Activated naive CD4-positive, alpha-beta T cell treated with anti-CD3 and anti-CD28 coated beads, Interleukin-2, amount 10 ng/mL, durations not matched to agents 7 days and 5 days (primary cell): ENCODE measurements at regions of chr1 and their contacts with region 1.

Region 1: DNA sequence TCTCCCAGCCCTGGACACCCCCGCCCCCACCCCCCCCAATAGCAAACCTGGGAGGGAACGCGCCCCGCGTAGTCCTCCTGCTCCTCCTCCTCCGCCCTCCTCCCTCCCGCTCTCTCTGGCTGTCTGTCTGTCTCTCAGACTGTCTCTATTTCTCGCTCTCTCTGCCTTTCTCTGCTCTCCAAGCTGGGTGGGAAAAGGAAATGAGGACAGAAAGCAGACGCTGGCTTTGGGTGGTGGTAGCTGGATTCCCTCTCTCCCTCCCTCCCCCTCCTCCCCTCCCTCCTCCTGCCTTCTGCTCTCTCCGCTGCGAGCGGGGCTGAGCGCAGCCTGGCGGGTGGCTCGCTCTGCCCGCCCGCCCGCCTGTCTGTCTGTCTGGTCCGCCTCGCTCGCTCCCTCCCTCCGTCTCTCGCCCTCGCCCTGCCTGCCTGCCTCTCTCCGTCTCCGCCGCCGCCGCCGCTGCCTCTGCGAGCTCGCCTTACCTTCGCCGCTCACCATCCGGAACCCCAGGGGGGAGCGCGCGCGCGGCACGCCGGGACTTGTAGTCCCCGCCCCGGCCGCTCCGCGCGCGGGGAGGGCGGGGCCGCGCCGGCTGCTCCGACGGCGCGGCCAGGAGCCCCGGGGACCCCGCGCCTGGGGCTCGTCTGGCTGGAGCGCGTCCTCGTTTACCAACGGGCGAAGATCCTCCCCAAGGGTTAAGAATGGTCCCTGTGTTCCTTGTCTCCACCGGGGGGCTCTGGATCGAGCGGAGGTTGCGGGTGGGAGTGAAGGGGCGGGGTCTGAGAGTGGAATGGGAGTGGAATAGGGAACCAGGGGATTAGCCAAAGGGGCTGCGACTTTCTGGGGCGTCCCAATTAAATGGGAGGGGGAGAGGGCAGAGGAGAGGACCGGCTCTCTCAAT is at the start of gene AHDC1:
- DNase-seq: peak; percentile 95
- H3K4me3 Mint-ChIP-seq: peak within 1 kb of the TSS; percentile 96
- H3K27ac Mint-ChIP-seq: peak within 1 kb of the TSS; percentile 88
- H3K4me1 Mint-ChIP-seq: peaks cover 52% of the 10 kb centered on the region
- H3K27me3 Mint-ChIP-seq: peaks cover 21% of the 10 kb centered on the region

Region 2: DNA sequence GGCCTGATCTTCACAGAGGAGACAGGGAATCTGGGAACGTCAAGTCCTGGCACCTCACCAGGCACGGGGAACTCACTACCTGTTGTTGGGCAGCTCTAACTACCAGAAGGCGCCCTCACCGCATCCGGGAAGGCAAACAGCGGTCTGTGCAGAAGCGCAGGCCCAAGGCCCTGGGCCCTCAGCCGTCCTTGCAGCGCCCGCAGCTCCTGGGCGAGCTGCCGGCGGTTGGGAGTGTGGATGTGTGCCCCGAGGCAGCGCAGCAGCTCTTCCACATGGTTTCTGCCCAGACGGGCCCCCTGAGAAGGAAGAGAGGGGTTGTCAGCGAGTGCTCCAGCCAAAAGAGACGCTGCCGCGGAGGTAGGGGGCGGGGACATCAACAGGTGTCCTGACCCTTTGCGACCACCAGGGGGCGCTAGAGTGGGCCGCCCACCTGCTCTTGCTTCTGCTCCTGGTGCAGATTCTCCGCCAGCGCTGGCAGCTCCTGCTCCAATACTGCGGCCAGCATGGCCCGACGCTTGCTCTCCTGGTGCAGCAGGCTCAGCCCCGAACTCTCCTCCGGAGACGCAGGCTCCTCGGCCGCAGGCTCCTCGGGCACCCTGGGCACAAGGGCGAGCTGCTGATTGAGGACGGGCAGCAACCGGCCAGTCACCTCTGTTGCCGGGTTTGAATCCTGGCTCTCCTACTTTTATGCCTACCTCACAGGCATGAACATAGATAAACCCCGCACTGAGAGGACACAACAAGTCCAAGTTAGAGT is 246.5 kb before region 1 on chr1:
- CTCF ChIA-PET with region 1: interaction called, 11 read pairs
- DNase-seq: peak; percentile 87
- H3K4me3 Mint-ChIP-seq: peak overlapping the region; percentile 67
- H3K27ac Mint-ChIP-seq: peak overlapping the region; percentile 88
- H3K4me1 Mint-ChIP-seq: peaks cover 41% of the 10 kb centered on the region
- H3K27me3 Mint-ChIP-seq: peaks cover 39% of the 10 kb centered on the region

Region 3: DNA sequence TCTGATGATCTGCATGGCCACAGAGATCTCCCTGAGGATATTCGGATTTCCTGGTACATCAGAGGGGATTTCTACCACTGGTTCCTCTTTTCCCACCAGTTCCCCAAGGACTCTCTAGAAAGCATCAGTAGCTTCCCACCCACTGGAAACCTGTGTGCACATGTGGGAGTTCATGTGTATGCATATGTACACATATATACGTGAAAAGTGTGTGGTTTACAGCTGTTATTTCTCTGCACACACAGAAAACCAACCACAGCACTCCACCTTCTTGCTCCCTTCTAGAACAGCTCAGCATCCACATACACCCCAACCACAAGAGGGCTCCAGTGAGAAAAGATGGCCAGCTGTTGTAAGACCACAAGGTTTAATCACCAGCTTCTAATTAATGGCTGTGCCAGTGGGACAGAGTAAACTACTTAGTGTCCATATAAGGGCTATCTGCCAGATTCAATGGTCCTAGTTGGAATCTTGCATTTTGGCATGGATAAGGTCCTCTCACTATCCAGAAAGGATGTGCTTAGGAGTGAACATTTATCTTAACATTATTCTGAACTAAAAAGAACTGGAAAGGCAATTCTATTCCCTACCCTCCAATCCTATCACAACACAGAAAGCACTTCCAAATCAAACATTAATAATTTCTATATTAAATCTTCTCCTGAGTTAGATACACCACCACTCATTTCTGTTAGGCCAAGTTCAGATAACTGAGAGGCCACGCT is 187.4 kb before region 1 on chr1:
- CTCF ChIA-PET with region 1: interaction called, 50 read pairs
- DNase-seq: peak; percentile 71
- H3K4me3 Mint-ChIP-seq: no peak overlapping the region
- H3K27ac Mint-ChIP-seq: no peak overlapping the region
- H3K4me1 Mint-ChIP-seq: peaks cover 22% of the 10 kb centered on the region
- H3K27me3 Mint-ChIP-seq: no peaks in the 10 kb centered on the region

Region 4: GRCh38 chr1:27556781-27557595 is 46.9 kb before region 1 on chr1:
- CTCF ChIA-PET with region 1: interaction called, 43 read pairs
- DNase-seq: peak; percentile 83
- H3K4me3 Mint-ChIP-seq: peak overlapping the region; percentile 48
- H3K27ac Mint-ChIP-seq: peak overlapping the region; percentile 84
- H3K4me1 Mint-ChIP-seq: peaks cover 35% of the 10 kb centered on the region
- H3K27me3 Mint-ChIP-seq: no peaks in the 10 kb centered on the region

Region 5: GRCh38 chr1:27588256-27589232 is 15.4 kb before region 1 on chr1:
- CTCF ChIA-PET with region 1: no interaction called
- DNase-seq: no peak
- H3K4me3 Mint-ChIP-seq: no peak overlapping the region
- H3K27ac Mint-ChIP-seq: no peak overlapping the region
- H3K4me1 Mint-ChIP-seq: peaks cover 10% of the 10 kb centered on the region
- H3K27me3 Mint-ChIP-seq: no peaks in the 10 kb centered on the region

Region 6: DNA sequence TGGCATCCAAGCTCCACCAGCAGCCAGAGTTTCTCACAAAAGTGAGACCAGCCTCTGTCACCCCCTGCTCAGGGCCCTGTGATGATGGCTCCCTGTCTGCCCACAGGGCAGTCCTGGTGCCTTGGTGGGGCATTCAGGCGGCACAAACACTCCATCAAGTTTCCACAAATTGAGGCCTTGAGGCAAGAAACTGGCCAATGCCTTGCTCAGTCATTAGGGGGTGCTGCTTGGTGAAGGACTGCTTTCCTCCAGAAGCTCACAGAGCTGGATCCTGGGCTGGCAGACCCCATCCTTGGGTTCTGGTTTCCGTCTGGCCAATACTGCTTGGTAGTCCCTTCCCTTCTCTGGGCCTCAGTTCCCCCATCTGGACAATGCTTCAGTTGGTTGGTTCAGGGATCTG is 12.5 kb after region 1 on chr1:
- CTCF ChIA-PET with region 1: interaction called, 14 read pairs
- DNase-seq: no peak
- H3K4me3 Mint-ChIP-seq: no peak overlapping the region
- H3K27ac Mint-ChIP-seq: no peak overlapping the region
- H3K4me1 Mint-ChIP-seq: peaks cover 50% of the 10 kb centered on the region
- H3K27me3 Mint-ChIP-seq: peaks cover 6% of the 10 kb centered on the region

Region 7: DNA sequence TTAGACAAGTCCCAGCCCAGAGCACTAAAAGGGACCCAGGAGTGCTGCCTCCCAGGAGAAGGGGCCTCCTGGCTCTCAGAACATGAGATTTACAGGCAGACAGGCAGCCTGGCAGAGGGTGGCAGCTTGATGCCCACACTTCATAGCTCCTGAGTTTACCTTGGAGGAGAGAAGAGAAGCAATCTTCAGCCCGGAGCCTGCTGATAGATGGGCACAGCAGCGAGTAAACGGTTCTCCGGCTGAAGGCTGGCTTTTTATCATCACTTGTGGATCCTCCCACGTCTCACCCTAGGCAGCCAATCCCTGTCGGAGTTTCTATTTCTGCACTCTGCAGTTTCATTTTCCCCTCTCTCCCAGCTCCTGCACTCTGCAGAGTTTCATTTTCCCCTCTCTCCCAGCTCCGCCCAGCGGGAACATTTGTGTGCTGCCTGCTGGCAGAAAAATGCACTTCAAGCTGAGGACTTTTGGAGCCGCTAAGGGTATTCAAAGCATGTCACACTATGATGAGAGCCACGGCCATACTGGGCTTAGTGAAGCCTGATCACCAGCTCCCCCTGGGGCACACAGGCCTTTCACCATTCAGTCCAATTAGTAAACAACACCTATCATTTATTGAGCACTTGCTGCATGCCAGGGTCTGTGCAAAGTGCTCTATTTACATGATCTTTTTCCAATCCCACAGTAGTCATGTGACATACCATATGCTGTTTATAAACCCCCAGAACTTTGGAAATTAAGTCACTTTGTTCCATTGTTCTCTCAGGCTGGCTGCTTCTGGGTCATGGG is 68.2 kb after region 1 on chr1 and contains the start of gene IFI6:
- CTCF ChIA-PET with region 1: interaction called, 43 read pairs
- DNase-seq: peak; percentile 91
- H3K4me3 Mint-ChIP-seq: peak within 1 kb of the TSS; percentile 88
- H3K27ac Mint-ChIP-seq: peak within 1 kb of the TSS; percentile 95
- H3K4me1 Mint-ChIP-seq: peaks cover 43% of the 10 kb centered on the region
- H3K27me3 Mint-ChIP-seq: no peaks in the 10 kb centered on the region